ENCODE measurements at regions of chr6 and their contacts with region 1.

Region 1: DNA sequence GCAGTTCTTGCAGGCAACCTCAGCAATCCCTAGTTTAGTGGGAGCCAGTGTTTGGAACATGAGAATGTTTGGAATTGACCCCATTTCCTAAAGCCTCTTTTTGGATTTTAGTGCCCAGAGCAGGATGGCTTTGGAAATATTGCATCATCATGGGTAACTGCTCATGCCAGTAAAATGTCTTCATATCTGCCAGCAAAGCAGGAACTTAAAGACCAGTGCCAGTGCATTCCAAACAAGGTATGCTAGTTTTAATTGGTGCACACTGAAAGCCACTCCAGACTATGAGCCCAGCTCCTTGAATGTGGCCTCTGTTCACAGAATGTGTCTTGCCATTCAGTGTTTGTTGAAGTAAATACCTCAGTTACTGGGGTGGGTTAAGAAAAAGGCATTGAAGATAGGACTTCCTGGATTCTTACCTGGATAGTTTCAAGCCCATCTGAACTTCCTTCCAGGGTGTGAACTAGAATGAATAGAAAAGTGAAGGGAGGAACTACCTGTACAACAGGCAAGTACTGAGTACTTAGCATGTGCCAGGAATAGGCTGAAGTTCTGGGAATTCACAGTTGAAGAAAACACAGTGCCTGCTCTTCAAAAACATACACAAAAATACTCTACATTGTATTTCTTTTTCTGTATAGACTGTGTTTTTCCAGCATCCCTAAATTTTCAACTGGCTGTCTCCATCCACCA is 70.5 kb downstream of the COL19A1 start:
- DNase-seq: no peak
- ATAC-seq: no peak
- H3K4me3 ChIP-seq: no peak overlapping the region
- H3K27ac ChIP-seq: no peak overlapping the region
- H3K4me1 ChIP-seq: no peaks in the 10 kb centered on the region
- H3K27me3 ChIP-seq: no peaks in the 10 kb centered on the region
- CTCF ChIP-seq: no peak
- EP300 ChIP-seq: no peak
- POLR2A ChIP-seq: no peak
- RAD21 ChIP-seq: no peak

Region 2: GRCh38 chr6:69542494-69542893 is 394.3 kb before region 1 on chr6:
- CTCF ChIA-PET with region 1: no interaction called
- POLR2A ChIA-PET with region 1: no interaction called
- RAD21 ChIA-PET with region 1: no interaction called
- SMC1A ChIA-PET with region 1: no interaction called
- in situ Hi-C with region 1: no loop called
- intact Hi-C with region 1: no loop called
- DNase-seq: no peak
- ATAC-seq: no peak
- H3K4me3 ChIP-seq: no peak overlapping the region
- H3K27ac ChIP-seq: no peak overlapping the region
- H3K4me1 ChIP-seq: no peaks in the 10 kb centered on the region
- H3K27me3 ChIP-seq: peaks cover 0 to 2% of the 10 kb centered on the region in 2 experiments; a peak in 2 of 4 replicates
- CTCF ChIP-seq: no peak
- EP300 ChIP-seq: no peak
- POLR2A ChIP-seq: no peak
- RAD21 ChIP-seq: no peak

Region 3: DNA sequence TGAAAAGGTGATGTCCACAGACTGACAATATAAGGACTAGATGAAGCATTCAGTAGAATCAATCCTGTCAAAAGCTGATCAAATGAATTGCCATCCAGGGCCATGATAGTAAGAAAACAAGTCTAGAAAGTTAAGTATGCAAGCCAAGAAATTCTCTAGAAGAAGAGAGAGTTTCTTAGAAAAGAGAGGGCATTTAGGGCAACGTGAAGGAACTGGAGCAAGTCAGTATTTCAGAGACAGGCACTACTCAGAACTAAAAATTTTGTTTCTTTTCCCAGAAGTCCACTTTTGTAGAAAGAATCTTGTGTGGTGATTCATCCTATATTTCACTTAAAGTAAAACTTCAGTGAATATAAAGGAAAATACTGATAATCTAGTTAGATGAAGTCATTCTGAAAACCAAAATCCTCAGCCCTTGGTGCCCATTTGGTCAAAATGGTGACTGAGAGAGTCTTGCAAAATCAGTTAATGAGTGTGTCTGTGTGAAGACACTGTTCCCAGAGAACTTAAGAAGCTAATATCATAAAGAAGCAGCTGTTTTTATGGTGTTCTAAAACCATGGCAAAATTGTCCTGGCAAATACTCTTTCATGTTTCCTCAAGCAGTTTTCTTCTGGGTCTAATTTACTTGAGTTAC is 11.8 kb after region 1 on chr6:
- CTCF ChIA-PET with region 1: interaction called, 4 read pairs
- POLR2A ChIA-PET with region 1: no interaction called
- RAD21 ChIA-PET with region 1: interaction called, 3 read pairs
- SMC1A ChIA-PET with region 1: interaction called, 11 read pairs
- in situ Hi-C with region 1: no loop called
- intact Hi-C with region 1: no loop called
- DNase-seq: no peak
- ATAC-seq: peak; percentile 22; the same call in 2 of the 3 replicates
- H3K4me3 ChIP-seq: no peak overlapping the region
- H3K27ac ChIP-seq: no peak overlapping the region
- H3K4me1 ChIP-seq: no peaks in the 10 kb centered on the region
- H3K27me3 ChIP-seq: no peaks in the 10 kb centered on the region
- CTCF ChIP-seq: no peak
- EP300 ChIP-seq: no peak
- POLR2A ChIP-seq: no peak
- RAD21 ChIP-seq: no peak

Region 4: GRCh38 chr6:70706491-70707123 is 769.8 kb after region 1 on chr6:
- CTCF ChIA-PET with region 1: no interaction called
- POLR2A ChIA-PET with region 1: no interaction called
- RAD21 ChIA-PET with region 1: no interaction called
- SMC1A ChIA-PET with region 1: no interaction called
- in situ Hi-C with region 1: no loop called
- intact Hi-C with region 1: no loop called
- DNase-seq: no peak
- ATAC-seq: peak; percentile 43
- H3K4me3 ChIP-seq: no peak overlapping the region
- H3K27ac ChIP-seq: no peak overlapping the region
- H3K4me1 ChIP-seq: peaks cover 6% of the 10 kb centered on the region; the same call in 1 of the 2 replicates
- H3K27me3 ChIP-seq: no peaks in the 10 kb centered on the region
- CTCF ChIP-seq: peak; percentile 13 to 55 (median 44); a peak in 4 of 6 replicates
- EP300 ChIP-seq: no peak
- POLR2A ChIP-seq: no peak
- RAD21 ChIP-seq: peak; percentile 74

Measured in GM12878 (cell line).